Panc1 (cell line): ENCODE measurements at regions of chr17 and their contacts with region 1.

Region 1: DNA sequence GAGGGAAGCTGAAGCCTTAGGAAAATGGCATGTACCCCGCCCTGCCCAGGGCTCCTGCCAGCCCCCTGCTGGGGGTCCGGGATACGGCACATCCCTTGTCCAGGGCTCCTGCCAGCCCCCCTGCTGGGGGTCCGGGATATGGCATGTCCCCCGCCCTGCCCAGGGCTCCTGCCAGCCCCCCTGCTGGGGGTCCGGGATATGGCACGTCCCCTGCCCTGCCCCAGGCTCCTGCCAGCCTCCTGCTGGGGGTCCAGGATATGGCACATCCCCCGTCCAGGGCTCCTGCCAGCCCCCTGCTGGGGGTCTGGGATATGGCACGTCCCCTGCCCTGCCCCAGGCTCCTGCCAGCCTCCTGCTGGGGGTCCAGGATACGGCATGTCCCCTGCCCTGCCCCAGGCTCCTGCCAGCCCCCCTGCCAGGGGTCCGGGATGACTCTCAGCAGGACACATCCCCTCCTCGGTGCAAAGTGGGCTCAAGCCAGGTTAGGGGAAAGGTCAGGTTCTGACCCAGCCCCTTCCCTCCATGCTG is 43.2 kb downstream of the RPH3AL start:
- DNase-seq: no peak
- ATAC-seq: peak; percentile 56
- H3K4me3 ChIP-seq: no peak overlapping the region
- H3K27ac ChIP-seq: no peak overlapping the region
- H3K4me1 ChIP-seq: no peaks in the 10 kb centered on the region
- H3K27me3 ChIP-seq: no peaks in the 10 kb centered on the region
- CTCF ChIP-seq: no peak; the same call in 1 of the 2 replicates

Region 2: DNA sequence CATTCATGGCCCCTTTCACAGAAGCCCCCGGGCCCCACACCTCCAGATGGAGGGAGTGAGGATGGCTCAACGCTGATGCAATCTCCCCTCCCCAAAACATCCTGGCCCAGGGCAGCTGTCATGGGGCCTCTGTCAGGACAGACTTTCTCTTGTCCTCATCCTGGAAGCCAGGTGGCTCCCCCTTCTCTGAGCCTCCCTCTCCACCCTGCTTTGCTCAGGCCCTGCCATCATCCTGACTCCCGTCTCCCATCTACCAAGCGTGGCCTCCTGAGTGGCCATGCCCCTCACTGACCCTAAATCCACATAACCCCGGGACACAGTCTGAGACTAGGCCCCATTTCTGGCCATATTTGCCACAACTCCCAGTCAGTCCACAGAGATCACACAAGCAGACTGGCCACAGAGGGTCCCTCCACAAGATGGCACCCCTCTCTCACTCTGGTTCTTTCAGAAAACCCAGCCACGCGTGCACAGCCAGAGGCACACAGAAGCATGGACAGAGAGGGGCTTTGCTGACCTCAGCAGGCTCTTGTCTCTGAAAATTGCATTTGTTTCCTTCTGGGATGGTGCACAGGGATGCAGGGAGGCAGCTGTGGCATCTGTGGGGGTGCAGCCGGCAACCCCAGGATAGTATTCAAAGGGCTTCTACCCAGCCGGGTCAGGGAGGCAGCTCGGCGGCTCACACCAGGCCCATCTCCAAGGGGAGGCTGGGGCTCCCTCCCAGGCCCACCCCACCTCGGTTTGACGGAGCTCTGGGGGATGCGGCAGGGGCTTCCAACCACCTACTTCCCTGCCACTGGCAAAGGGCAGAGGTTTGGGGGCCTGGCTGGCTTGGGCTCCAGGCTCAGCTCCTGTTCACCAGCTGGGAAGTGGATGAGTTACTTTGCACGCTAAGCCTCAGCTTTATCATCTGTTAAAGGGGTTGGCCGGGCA is 144.9 kb before region 1 on chr17:
- CTCF ChIA-PET with region 1: no interaction called
- POLR2A ChIA-PET with region 1: no interaction called
- in situ Hi-C with region 1: no loop called
- intact Hi-C with region 1: no loop called
- DNase-seq: peak; percentile 10
- ATAC-seq: peak; percentile 83
- H3K4me3 ChIP-seq: no peak overlapping the region
- H3K27ac ChIP-seq: no peak overlapping the region
- H3K4me1 ChIP-seq: no peaks in the 10 kb centered on the region
- H3K27me3 ChIP-seq: no peaks in the 10 kb centered on the region
- CTCF ChIP-seq: peak; percentile 76

Region 3: GRCh38 chr17:282912-283882 is 26.2 kb before region 1 on chr17:
- CTCF ChIA-PET with region 1: interaction called, 16 read pairs
- POLR2A ChIA-PET with region 1: no interaction called
- in situ Hi-C with region 1: no loop called
- intact Hi-C with region 1: no loop called
- DNase-seq: no peak
- ATAC-seq: no peak
- H3K4me3 ChIP-seq: no peak overlapping the region
- H3K27ac ChIP-seq: no peak overlapping the region
- H3K4me1 ChIP-seq: no peaks in the 10 kb centered on the region
- H3K27me3 ChIP-seq: no peaks in the 10 kb centered on the region
- CTCF ChIP-seq: no peak

Region 4: DNA sequence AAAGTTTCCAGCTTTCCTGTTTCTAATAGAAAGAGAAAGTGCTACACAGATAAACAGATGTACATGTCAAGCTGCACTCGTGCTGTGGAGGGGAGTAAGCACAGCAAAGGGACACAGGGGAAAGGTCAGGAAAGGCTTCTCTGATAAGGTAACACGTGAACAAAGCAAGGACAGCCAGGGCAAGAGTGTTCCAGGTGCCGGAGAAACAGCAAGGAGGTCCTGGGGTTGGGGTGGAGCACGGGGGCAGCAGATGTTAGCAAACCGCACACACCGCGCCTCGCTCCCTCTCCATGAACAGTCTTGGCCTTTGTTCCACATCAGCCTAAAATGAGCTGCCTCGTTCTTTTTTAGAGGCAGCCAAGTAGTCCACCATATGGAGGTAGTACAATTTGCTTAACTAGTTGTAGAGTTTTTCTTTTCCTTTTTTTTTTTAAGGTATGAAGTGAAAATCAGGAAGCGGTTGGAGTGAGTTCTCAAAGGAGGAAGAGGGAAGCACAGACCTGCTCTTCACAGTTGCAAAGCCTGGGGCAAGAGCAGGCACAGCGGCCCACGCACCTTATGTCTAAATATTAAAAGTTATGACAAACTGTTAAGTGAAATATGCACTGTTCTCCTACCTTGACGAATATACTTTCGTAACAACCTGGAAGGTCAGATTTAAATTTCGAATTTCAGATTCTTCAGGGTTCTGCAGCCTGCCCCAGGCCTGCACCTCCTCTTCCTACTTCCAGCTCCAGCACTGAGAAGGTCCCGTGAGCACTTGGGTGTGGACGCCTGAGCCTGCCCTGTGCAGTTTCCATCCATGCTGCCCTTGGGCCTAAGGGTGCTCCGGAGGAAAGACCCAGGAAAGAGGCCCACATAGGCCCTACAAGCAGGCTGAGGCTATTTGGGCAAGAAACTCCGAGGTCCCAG is 84.6 kb after region 1 on chr17:
- CTCF ChIA-PET with region 1: no interaction called
- POLR2A ChIA-PET with region 1: no interaction called
- in situ Hi-C with region 1: no loop called
- intact Hi-C with region 1: no loop called
- DNase-seq: no peak
- ATAC-seq: no peak
- H3K4me3 ChIP-seq: no peak overlapping the region
- H3K27ac ChIP-seq: no peak overlapping the region
- H3K4me1 ChIP-seq: no peaks in the 10 kb centered on the region
- H3K27me3 ChIP-seq: no peaks in the 10 kb centered on the region
- CTCF ChIP-seq: no peak

Region 5: GRCh38 chr17:418421-418751 is 109.0 kb after region 1 on chr17:
- CTCF ChIA-PET with region 1: interaction called, 11 read pairs
- POLR2A ChIA-PET with region 1: no interaction called
- in situ Hi-C with region 1: no loop called
- intact Hi-C with region 1: no loop called
- DNase-seq: no peak
- ATAC-seq: no peak
- H3K4me3 ChIP-seq: no peak overlapping the region
- H3K27ac ChIP-seq: no peak overlapping the region
- H3K4me1 ChIP-seq: no peaks in the 10 kb centered on the region
- H3K27me3 ChIP-seq: no peaks in the 10 kb centered on the region
- CTCF ChIP-seq: no peak